Psoas muscle (tissue), 8 donors: ENCODE measurements at regions of chr20 and their contacts with region 1.

Region 1: GRCh38 chr20:63699466-63700198 is 3.2 kb downstream of the TNFRSF6B start:
- DNase-seq: peak; percentile 24 to 61
- ATAC-seq: no peak
- H3K4me3 ChIP-seq: no peak overlapping the region
- H3K27ac ChIP-seq: peak overlapping the region; percentile 71
- H3K4me1 ChIP-seq: peaks cover 36% of the 10 kb centered on the region
- H3K27me3 ChIP-seq: no peaks in the 10 kb centered on the region
- CTCF ChIP-seq: no peak

Region 2: GRCh38 chr20:63664861-63665716 is 34.5 kb before region 1 on chr20:
- intact Hi-C with region 1: loop called in 1 of 2 experiments (anchors 5 kb)
- DNase-seq: no peak
- ATAC-seq: peak in 2 of 4 donors; percentile 10 to 12
- H3K4me3 ChIP-seq: no peak overlapping the region
- H3K27ac ChIP-seq: no peak overlapping the region
- H3K4me1 ChIP-seq: no peaks in the 10 kb centered on the region
- H3K27me3 ChIP-seq: no peaks in the 10 kb centered on the region
- CTCF ChIP-seq: no peak

Region 3: GRCh38 chr20:63739130-63740069 is 39.8 kb after region 1 on chr20 and contains the start of gene SLC2A4RG:
- intact Hi-C with region 1: loop called in 1 of 2 experiments (anchors 5 kb)
- DNase-seq: peak; percentile 86 to 91
- ATAC-seq: peak; percentile 68 to 77 (median 70)
- H3K4me3 ChIP-seq: peak within 1 kb of the TSS; percentile 79
- H3K27ac ChIP-seq: peak within 1 kb of the TSS; percentile 95
- H3K4me1 ChIP-seq: peaks cover 15% of the 10 kb centered on the region
- H3K27me3 ChIP-seq: no peaks in the 10 kb centered on the region
- CTCF ChIP-seq: no peak
- total RNA-seq, gene SLC2A4RG: 40.2 to 79.1 (median 54.7) TPM

Region 4: GRCh38 chr20:63908008-63908624 is 208.5 kb after region 1 on chr20:
- intact Hi-C with region 1: no loop called
- DNase-seq: no peak
- ATAC-seq: no peak
- H3K4me3 ChIP-seq: no peak overlapping the region
- H3K27ac ChIP-seq: no peak overlapping the region
- H3K4me1 ChIP-seq: peaks cover 3% of the 10 kb centered on the region
- H3K27me3 ChIP-seq: no peaks in the 10 kb centered on the region
- CTCF ChIP-seq: no peak